CD4-positive, alpha-beta T cell (primary cell): ENCODE measurements at regions of chr16 and their contacts with region 1.

Region 1: GRCh38 chr16:17369421-17370222 is 101.1 kb downstream of the XYLT1 start:
- DNase-seq: peak; percentile 61 to 93 (median 76)
- ATAC-seq: peak; percentile 83
- H3K4me3 ChIP-seq: peak overlapping the region; percentile 54
- H3K4me3 Mint-ChIP-seq: peak overlapping the region; percentile 88
- H3K27ac ChIP-seq: peak overlapping the region; percentile 88 to 90
- H3K27ac Mint-ChIP-seq: peak overlapping the region; percentile 93
- H3K4me1 ChIP-seq: peaks cover 79% of the 10 kb centered on the region
- H3K4me1 Mint-ChIP-seq: peaks cover 96% of the 10 kb centered on the region
- H3K27me3 ChIP-seq: no peaks in the 10 kb centered on the region
- H3K27me3 Mint-ChIP-seq: no peaks in the 10 kb centered on the region
- CTCF ChIP-seq: no peak

Region 2: DNA sequence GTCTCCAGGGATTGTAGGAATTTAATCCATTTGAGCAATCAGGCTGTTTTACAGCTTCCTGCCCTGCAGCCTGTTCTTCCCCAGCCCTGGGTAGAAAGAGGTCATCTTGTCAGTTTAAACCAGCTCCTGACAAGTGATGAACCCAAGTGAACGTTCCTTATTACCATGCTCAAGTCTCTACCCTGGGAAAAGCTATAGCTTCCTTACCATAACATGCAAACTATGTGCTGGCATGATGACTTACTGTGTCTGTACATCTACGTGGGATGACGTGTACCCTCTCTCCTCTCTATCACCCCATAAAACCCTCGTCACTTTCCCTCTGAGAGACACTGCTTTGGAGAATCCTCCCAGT is 351.1 kb before region 1 on chr16:
- CTCF ChIA-PET with region 1: no interaction called
- POLR2A ChIA-PET with region 1: no interaction called
- intact Hi-C with region 1: loop called (anchors 1 to 10 kb)
- DNase-seq: no peak
- ATAC-seq: no peak
- H3K4me3 ChIP-seq: no peak overlapping the region
- H3K4me3 Mint-ChIP-seq: no peak overlapping the region
- H3K27ac ChIP-seq: no peak overlapping the region
- H3K27ac Mint-ChIP-seq: peak overlapping the region; percentile 31
- H3K4me1 ChIP-seq: peaks cover 4% of the 10 kb centered on the region
- H3K4me1 Mint-ChIP-seq: peaks cover 25% of the 10 kb centered on the region
- H3K27me3 ChIP-seq: no peaks in the 10 kb centered on the region
- H3K27me3 Mint-ChIP-seq: no peaks in the 10 kb centered on the region
- CTCF ChIP-seq: no peak

Region 3: GRCh38 chr16:17343028-17343427 is 26.6 kb before region 1 on chr16:
- CTCF ChIA-PET with region 1: interaction called, 4 read pairs
- POLR2A ChIA-PET with region 1: interaction called, 21 read pairs
- intact Hi-C with region 1: loop called (anchors 1 to 5 kb)
- DNase-seq: peak in 11 of 14 experiments; percentile 6 to 76 (median 34)
- ATAC-seq: peak; percentile 83
- H3K4me3 ChIP-seq: no peak overlapping the region
- H3K4me3 Mint-ChIP-seq: peak overlapping the region; percentile 75
- H3K27ac ChIP-seq: no peak overlapping the region
- H3K27ac Mint-ChIP-seq: peak overlapping the region; percentile 86
- H3K4me1 ChIP-seq: peaks cover 72% of the 10 kb centered on the region
- H3K4me1 Mint-ChIP-seq: peaks cover 89% of the 10 kb centered on the region
- H3K27me3 ChIP-seq: no peaks in the 10 kb centered on the region
- H3K27me3 Mint-ChIP-seq: no peaks in the 10 kb centered on the region
- CTCF ChIP-seq: no peak

Region 4: DNA sequence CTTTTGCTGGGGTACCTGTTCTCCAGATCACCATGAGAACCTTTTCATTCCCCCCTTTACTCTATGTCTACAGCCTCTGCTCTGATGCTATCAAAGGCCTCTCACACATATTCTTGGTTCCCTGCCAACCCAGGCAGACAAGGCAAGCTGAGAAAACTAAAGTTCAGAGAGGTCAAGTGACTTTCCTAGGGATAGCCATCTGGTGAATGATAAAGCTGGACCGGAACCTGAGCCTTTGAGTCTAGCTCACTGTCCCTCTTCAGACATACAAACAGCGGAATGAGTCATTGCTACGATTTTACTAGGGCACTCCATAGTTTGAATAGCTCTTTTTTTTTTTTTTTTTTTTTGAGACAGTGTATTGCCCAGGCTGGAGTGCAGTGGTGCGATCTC is 27.9 kb after region 1 on chr16:
- CTCF ChIA-PET with region 1: interaction called, 3 read pairs
- POLR2A ChIA-PET with region 1: interaction called, 51 read pairs
- intact Hi-C with region 1: loop called (anchors 1 to 5 kb)
- DNase-seq: peak in 7 of 14 experiments; percentile 15 to 71 (median 35)
- ATAC-seq: peak; percentile 19
- H3K4me3 ChIP-seq: no peak overlapping the region
- H3K4me3 Mint-ChIP-seq: peak overlapping the region; percentile 82
- H3K27ac ChIP-seq: peak overlapping the region; percentile 59 to 89
- H3K27ac Mint-ChIP-seq: peak overlapping the region; percentile 99
- H3K4me1 ChIP-seq: peaks cover 82% of the 10 kb centered on the region
- H3K4me1 Mint-ChIP-seq: peaks cover 73% of the 10 kb centered on the region
- H3K27me3 ChIP-seq: no peaks in the 10 kb centered on the region
- H3K27me3 Mint-ChIP-seq: no peaks in the 10 kb centered on the region
- CTCF ChIP-seq: no peak

Region 5: DNA sequence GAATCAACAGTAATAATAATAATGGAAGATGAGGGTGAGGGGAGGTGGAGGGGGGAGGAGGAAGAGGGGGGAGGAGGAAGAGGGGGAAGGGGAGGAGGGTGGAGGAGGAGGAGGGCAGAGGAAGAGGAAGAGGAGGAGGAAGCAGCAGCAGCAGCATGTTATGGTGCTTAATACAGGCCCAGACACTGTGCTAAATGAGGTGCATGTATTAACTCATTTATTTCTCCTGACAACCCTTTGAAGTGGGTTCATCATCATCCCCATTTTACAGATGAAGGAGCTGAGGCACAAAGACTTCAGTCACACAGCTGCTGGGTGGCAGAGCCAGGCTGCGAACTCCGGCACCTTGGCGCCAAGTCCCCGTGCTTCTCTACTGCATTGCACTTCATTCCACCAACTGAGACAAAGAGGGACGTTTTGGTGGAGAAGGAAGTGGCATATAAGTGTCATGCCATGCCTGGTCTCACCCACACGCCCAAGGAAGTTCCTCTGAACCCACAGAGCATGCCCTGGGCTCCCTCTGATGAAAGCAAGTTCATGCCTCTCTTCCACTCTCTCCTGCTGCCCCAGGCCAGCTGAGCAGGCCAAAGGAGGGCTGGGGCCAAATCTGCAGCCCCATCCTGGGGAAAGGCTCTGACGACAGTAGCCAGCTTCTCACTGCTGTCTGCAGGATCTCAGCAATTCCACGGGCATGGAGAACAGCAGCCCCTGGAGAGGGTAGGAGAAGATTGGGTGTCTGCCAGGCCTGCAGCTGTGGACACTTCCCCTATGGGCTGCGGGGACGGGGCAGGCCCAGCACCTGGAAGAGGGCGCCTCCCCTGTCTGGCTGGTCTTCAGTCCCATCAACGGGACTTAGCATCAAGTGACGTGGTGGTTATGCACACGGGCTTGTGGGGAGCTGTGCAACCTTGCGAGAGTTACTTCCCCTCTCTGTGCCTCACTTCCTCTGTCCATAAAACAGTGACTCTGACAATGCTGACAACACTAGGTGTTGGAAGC is 79.3 kb after region 1 on chr16:
- CTCF ChIA-PET with region 1: no interaction called
- POLR2A ChIA-PET with region 1: interaction called, 10 read pairs
- intact Hi-C with region 1: no loop called
- DNase-seq: peak in 11 of 14 experiments; percentile 2 to 85 (median 29)
- ATAC-seq: peak; percentile 81
- H3K4me3 ChIP-seq: peak overlapping the region; percentile 9
- H3K4me3 Mint-ChIP-seq: peak overlapping the region; percentile 49
- H3K27ac ChIP-seq: peak overlapping the region in 1 of 2 donors; percentile 62
- H3K27ac Mint-ChIP-seq: peak overlapping the region; percentile 92
- H3K4me1 ChIP-seq: peaks cover 52% of the 10 kb centered on the region
- H3K4me1 Mint-ChIP-seq: peaks cover 62% of the 10 kb centered on the region
- H3K27me3 ChIP-seq: no peaks in the 10 kb centered on the region
- H3K27me3 Mint-ChIP-seq: no peaks in the 10 kb centered on the region
- CTCF ChIP-seq: no peak

Region 6: DNA sequence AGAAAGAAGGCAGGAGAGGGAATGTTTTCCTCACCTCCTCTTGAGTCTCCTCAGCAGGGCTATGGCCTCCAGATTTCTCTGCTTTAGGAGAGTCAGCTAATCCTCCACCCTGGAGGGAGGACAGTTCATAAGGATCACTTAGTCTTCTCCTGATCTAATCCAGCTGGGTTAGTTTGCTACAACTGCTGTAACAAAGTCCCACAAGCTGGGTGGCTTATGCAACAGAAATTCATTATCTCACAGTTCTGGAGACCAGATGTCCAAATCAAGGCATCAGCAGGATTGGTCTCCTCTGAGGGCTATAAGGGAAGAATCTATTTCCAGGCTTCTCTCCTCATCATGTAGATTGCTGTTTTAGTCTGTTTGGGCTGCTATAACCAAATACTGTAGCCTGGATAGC is 141.7 kb after region 1 on chr16:
- CTCF ChIA-PET with region 1: no interaction called
- POLR2A ChIA-PET with region 1: no interaction called
- intact Hi-C with region 1: no loop called
- DNase-seq: no peak
- ATAC-seq: no peak
- H3K4me3 ChIP-seq: no peak overlapping the region
- H3K4me3 Mint-ChIP-seq: no peak overlapping the region
- H3K27ac ChIP-seq: no peak overlapping the region
- H3K27ac Mint-ChIP-seq: no peak overlapping the region
- H3K4me1 ChIP-seq: no peaks in the 10 kb centered on the region
- H3K4me1 Mint-ChIP-seq: no peaks in the 10 kb centered on the region
- H3K27me3 ChIP-seq: peaks cover 6 to 8% of the 10 kb centered on the region in 2 experiments
- H3K27me3 Mint-ChIP-seq: peaks cover 7% of the 10 kb centered on the region
- CTCF ChIP-seq: no peak